AG04449 (cell line): ENCODE measurements at regions of chr10 and their contacts with region 1.

Region 1: GRCh38 chr10:35027567-35027966 is 62.6 kb downstream of the CUL2 start:
- DNase-seq: no peak
- H3K4me3 ChIP-seq: no peak overlapping the region
- CTCF ChIP-seq: peak; percentile 18

Region 2: DNA sequence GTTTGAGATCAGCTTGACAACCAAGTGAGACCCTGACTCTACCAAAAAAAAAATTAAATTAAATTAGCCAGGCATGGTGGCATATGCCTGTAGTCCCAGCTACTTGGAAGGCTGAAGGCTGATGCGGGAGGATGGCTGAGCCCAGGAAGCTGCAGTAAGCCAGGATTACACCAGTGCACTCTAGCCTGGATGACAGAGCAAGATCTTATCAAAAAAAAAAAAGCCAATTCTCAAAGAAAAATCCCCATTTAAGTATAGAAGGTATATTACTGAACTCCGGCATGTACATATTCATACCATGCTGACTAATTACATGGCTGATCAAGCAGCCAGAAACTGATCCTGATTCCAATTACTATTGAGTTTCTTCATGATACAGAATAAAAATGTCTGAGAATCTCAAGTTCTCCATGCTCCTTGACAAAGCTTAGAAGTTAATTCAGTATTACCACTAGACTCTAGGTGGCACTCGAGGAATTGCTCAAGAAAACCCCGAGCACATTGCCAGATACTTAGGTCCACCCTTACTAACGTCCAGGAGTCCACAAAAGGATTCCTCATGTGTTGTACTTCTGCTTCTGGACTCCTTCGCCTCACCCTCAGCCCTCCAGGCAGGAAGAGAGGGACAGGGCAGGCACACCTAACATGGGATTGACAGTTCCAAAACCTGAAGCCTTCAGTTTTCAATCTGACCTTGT is 361.4 kb before region 1 on chr10:
- CTCF ChIA-PET with region 1: interaction called, 45 read pairs
- POLR2A ChIA-PET with region 1: no interaction called
- DNase-seq: peak; percentile 70
- H3K4me3 ChIP-seq: no peak overlapping the region
- CTCF ChIP-seq: peak; percentile 50

Region 3: GRCh38 chr10:34723750-34724149 is 303.8 kb before region 1 on chr10:
- CTCF ChIA-PET with region 1: interaction called, 24 read pairs
- POLR2A ChIA-PET with region 1: no interaction called
- DNase-seq: no peak
- H3K4me3 ChIP-seq: 0 out of 2 replicates have a peak overlapping the region, but pooled peaks have one; percentile 9
- CTCF ChIP-seq: peak; percentile 44

Region 4: DNA sequence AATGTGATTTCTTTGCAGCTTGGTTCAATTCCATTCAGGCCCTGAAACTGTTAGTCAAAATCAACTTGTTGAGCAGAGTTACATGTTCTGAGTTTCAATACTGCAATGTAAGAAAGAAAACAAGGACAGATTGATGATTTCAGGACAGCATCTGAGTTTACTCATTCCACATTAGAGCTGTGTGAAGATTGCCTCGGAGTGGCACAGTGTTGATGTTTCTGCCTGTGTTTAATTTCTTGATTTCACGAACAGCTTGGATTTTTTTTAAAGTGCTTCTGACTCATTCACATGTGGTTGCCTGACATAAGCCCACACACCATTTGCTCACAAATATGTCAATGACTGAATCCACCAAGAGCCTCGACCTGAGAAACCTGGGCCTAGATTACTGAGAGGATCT is 111.3 kb before region 1 on chr10:
- CTCF ChIA-PET with region 1: no interaction called
- POLR2A ChIA-PET with region 1: no interaction called
- DNase-seq: peak; percentile 71
- H3K4me3 ChIP-seq: no peak overlapping the region
- CTCF ChIP-seq: no peak

Region 5: DNA sequence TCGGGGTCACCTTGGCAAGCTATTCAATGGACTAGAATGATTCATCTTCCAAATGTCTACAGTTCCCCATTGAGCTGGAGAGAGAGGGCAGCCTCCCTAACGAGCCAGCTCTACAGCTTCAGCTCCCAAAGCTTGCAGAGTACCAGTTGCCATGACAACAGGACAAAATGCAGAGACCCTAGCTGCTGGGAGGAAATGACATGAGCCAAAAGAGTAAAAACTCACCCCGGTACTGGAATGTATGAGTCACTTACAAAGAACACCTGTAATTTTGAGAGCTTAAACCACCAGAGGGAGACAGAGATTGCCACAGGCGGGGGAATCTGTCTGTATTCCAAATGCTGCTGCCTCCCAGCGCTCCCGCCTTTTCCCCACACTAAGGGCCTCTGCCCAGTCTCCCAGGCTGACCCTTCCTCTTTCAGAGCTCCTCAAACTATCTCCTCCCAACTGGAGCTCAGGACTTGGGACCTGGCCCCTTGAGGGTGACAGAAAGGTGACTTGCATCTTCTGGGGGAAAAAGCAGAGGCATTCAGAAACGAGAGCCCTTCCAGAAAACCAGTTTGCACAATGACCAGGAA is 32.9 kb before region 1 on chr10:
- CTCF ChIA-PET with region 1: interaction called, 39 read pairs
- POLR2A ChIA-PET with region 1: no interaction called
- DNase-seq: no peak
- H3K4me3 ChIP-seq: no peak overlapping the region
- CTCF ChIP-seq: peak; percentile 34

Region 6: GRCh38 chr10:35040760-35041501 is 13.4 kb after region 1 on chr10:
- CTCF ChIA-PET with region 1: interaction called, 18 read pairs
- POLR2A ChIA-PET with region 1: interaction called, 3 read pairs
- DNase-seq: no peak
- H3K4me3 ChIP-seq: no peak overlapping the region
- CTCF ChIP-seq: no peak